IMR-90 (cell line): ENCODE measurements at regions of chr4 and their contacts with region 1.

Region 1: DNA sequence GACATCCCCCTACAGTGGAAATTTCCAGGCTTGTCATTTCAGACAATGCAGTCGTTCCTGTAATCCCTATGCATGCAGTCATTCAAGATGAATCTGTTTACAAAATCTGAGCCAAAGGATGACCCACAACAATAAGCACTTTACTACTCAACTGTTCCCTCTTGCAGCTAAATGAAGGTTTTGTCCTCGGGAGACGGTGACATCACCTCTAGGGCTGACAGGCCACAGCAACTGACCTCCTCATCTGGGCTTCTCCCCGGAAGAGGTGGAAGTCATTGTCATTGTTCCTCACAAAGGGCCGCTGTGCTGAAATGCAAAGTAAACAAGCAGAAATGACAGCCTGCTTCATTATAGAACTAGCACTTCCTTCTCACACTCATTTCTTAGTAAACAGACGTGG is 29.2 kb downstream of the CLRN2 start:
- DNase-seq: no peak
- ATAC-seq: no peak; the same call in 1 of the 2 replicates
- H3K4me3 ChIP-seq: no peak overlapping the region
- H3K27ac ChIP-seq: no peak overlapping the region
- H3K4me1 ChIP-seq: peaks cover 1% of the 10 kb centered on the region; the same call in 1 of the 2 replicates
- H3K27me3 ChIP-seq: no peaks in the 10 kb centered on the region; the same call in 1 of the 2 replicates
- CTCF ChIP-seq: no peak
- POLR2A ChIP-seq: no peak
- RAD21 ChIP-seq: no peak

Region 2: DNA sequence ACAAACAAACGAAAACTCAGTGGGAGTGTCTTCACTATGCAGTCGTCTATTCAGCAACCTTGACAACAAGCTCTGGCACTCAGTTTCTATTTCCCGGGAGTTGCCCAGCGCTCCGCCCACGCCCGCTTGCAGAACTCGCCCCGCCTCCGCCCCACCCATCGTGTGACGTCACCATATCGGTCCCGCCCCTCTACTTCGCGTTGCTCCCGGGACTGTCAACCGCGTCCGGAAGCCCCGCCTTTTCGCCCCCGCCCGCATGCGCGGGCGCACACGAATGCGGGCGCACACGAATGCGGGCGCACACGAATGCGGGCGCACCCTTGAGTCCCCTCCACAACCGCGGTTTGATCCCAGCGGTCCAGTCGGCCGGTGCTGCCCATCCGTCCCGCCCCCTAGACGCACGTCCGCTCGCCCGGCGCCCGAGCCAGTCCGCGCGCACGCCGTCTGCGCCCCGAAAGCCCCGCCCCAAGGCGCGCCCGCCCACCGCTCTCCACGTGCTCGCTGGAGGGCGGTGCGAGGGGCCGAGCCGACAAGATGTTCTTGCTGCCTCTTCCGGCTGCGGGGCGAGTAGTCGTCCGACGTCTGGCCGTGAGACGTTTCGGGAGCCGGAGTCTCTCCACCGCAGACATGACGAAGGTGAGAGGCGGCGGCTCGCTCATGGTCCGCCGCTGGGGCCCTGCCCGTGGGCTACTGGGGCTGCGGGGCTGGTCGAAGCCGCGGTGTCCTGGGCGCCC is 32.9 kb after region 1 on chr4 and contains the start of gene LAP3:
- CTCF ChIA-PET with region 1: no interaction called
- POLR2A ChIA-PET with region 1: no interaction called
- dilution Hi-C with region 1: no loop called
- in situ Hi-C with region 1: no loop called
- intact Hi-C with region 1: loop called (anchors 2 kb)
- DNase-seq: peak; percentile 96
- ATAC-seq: peak; percentile 97
- H3K4me3 ChIP-seq: peak within 1 kb of the TSS; percentile 65
- H3K27ac ChIP-seq: peak within 1 kb of the TSS; percentile 62
- H3K4me1 ChIP-seq: peaks cover 6% of the 10 kb centered on the region; the same call in 1 of the 2 replicates
- H3K27me3 ChIP-seq: no peaks in the 10 kb centered on the region
- CTCF ChIP-seq: 0 out of 2 replicates have a peak, but pooled peaks have one; percentile 1
- POLR2A ChIP-seq: peak; percentile 95
- RAD21 ChIP-seq: no peak
- total RNA-seq, gene LAP3: 91.6 and 93.0 TPM in 2 replicates

Region 3: DNA sequence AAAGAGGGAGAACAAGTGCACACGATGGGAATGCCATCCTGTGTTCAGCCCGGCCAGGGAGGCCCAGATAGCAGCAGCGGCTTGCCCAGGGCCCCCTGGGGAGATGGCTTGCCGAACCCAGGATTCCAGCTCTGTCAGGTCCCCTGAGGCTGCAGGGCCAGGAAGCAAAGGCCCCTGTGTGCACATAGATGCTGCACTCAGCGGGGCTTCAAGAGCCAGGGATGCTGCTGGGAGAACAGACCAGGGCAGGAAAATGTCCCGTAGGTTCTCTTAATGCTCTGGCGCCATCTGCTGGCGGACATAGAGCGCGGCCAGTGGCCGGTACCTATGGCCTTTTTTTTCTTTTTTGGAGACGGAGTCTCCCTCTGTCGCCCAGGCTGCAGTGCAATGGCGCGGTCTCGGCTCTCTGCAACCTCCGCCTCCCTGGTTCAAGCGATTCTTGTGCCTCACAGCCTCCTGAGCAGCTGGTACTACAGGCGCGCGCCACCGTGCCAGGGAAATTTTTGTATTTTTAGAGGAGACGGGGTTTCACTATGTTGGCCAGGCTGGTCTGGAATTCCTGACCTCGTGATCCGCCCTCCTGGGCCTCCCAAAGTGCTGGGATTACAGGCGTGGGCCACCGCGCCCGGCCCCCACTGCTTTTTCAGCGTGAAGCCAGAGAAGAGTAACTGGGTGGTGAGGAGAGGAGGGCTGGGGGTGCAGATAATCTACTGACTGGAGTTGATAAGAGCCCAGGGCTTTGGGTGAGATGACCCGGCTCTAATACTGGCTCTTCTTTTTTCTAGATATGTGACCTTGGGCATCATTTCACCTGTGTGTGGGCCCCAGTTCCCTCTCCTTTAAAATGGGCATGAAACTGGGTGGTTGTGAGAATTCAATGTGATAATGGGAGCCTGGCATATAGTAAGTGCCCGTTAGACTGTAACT is 92.8 kb after region 1 on chr4:
- CTCF ChIA-PET with region 1: interaction called, 7 read pairs
- POLR2A ChIA-PET with region 1: no interaction called
- dilution Hi-C with region 1: no loop called
- in situ Hi-C with region 1: no loop called
- intact Hi-C with region 1: loop called (anchors 1 kb)
- DNase-seq: peak; percentile 69
- ATAC-seq: peak; percentile 96
- H3K4me3 ChIP-seq: no peak overlapping the region
- H3K27ac ChIP-seq: no peak overlapping the region
- H3K4me1 ChIP-seq: no peaks in the 10 kb centered on the region
- H3K27me3 ChIP-seq: no peaks in the 10 kb centered on the region
- CTCF ChIP-seq: peak; percentile 86
- POLR2A ChIP-seq: no peak
- RAD21 ChIP-seq: peak; percentile 79